ENCODE measurements at regions of chr5 and their contacts with region 1.

Region 1: GRCh38 chr5:128201065-128201926 is 117.7 kb downstream of the SLC12A2 start:
- DNase-seq: no peak
- H3K4me3 ChIP-seq: peak overlapping the region; percentile 2; the same call in 1 of the 2 replicates
- H3K27me3 ChIP-seq: no peaks in the 10 kb centered on the region
- CTCF ChIP-seq: peak; percentile 64

Region 2: GRCh38 chr5:127564002-127564769 is 637.1 kb before region 1 on chr5:
- CTCF ChIA-PET with region 1: interaction called, 12 read pairs
- POLR2A ChIA-PET with region 1: no interaction called
- DNase-seq: no peak
- H3K4me3 ChIP-seq: no peak overlapping the region
- H3K27me3 ChIP-seq: peaks cover 2% of the 10 kb centered on the region; the same call in 1 of the 2 replicates
- CTCF ChIP-seq: peak; percentile 71

Region 3: DNA sequence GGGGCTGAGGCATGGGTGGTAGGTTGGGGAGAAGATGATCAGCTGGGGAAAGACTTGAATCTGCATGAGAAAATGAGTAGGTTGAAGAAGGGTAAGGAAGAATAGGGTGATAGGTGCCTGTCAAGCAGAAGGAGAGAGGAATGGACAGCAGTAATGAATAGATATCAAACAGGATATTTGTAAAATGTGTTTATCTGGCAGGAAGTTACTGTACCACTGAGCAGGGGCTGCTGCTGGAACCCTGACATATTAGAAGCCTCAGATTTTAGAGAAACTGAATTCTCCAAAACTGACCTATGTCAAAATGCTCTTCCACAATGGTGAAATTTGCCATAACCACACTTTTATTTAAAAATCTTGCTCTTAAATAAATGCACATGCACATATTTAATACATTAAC is 457.1 kb before region 1 on chr5:
- CTCF ChIA-PET with region 1: interaction called, 13 read pairs
- POLR2A ChIA-PET with region 1: no interaction called
- DNase-seq: no peak
- H3K4me3 ChIP-seq: no peak overlapping the region
- H3K27me3 ChIP-seq: no peaks in the 10 kb centered on the region
- CTCF ChIP-seq: no peak

Region 4: GRCh38 chr5:127757576-127757975 is 443.7 kb before region 1 on chr5:
- CTCF ChIA-PET with region 1: interaction called, 15 read pairs
- POLR2A ChIA-PET with region 1: no interaction called
- DNase-seq: no peak
- H3K4me3 ChIP-seq: no peak overlapping the region
- H3K27me3 ChIP-seq: no peaks in the 10 kb centered on the region
- CTCF ChIP-seq: peak; percentile 38

Region 5: DNA sequence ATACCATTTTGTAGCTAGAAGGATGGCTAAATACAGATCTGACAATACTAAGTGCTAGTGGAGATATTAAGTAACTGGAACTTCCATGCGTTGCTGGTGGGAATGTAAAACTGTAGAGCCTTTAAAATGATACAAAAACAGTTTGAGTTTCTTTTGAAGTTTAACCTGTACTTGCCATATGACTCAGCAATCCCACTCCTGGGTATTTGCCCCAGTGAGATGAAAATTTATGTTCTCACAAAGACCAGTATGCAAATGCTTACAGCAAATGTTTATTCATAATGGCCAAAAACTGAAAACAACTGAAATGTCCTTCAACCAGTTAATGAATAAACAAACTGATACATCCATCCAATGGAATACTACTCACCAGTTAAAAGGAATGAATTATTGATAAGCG is 19.5 kb after region 1 on chr5:
- CTCF ChIA-PET with region 1: no interaction called
- POLR2A ChIA-PET with region 1: no interaction called
- DNase-seq: no peak
- H3K4me3 ChIP-seq: no peak overlapping the region
- H3K27me3 ChIP-seq: peaks cover 3% of the 10 kb centered on the region; the same call in 1 of the 2 replicates
- CTCF ChIP-seq: no peak

Region 6: GRCh38 chr5:128271873-128272446 is 70.7 kb after region 1 on chr5:
- CTCF ChIA-PET with region 1: no interaction called
- POLR2A ChIA-PET with region 1: no interaction called
- DNase-seq: peak; percentile 26
- H3K4me3 ChIP-seq: no peak overlapping the region
- H3K27me3 ChIP-seq: no peaks in the 10 kb centered on the region
- CTCF ChIP-seq: no peak

Region 7: DNA sequence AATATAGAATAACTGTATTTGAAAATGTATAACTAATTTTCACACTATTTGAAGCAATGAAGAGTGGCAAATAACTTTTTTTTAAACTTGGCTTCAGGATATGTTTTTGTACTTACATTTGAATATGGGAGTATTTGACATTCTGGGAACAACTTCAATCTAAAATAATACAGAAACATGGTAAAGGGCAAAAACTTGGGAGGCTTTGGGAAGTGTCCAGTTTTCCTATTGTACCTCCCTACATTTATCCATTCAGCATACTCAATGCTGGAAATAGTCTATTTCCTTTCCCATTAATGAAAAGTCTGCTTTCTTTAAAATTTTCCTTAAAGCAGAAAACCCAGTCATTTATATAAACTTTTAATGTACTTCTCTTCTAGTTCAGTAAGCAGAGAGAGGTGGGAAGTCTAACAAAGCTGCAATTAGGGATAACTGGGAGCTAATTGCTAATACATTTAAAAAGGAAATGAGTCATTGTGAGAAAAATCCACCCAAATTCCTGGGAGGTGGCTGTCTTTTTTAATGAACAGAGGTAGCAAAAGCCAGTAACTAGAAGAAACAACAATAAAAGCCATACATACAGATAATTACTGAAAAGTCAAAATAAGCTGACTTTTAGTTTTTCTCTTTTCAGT is 208.0 kb after region 1 on chr5:
- CTCF ChIA-PET with region 1: no interaction called
- POLR2A ChIA-PET with region 1: no interaction called
- DNase-seq: no peak
- H3K4me3 ChIP-seq: no peak overlapping the region
- H3K27me3 ChIP-seq: no peaks in the 10 kb centered on the region
- CTCF ChIP-seq: no peak